ENCODE measurements at regions of chr22 and their contacts with region 1.

Region 1: DNA sequence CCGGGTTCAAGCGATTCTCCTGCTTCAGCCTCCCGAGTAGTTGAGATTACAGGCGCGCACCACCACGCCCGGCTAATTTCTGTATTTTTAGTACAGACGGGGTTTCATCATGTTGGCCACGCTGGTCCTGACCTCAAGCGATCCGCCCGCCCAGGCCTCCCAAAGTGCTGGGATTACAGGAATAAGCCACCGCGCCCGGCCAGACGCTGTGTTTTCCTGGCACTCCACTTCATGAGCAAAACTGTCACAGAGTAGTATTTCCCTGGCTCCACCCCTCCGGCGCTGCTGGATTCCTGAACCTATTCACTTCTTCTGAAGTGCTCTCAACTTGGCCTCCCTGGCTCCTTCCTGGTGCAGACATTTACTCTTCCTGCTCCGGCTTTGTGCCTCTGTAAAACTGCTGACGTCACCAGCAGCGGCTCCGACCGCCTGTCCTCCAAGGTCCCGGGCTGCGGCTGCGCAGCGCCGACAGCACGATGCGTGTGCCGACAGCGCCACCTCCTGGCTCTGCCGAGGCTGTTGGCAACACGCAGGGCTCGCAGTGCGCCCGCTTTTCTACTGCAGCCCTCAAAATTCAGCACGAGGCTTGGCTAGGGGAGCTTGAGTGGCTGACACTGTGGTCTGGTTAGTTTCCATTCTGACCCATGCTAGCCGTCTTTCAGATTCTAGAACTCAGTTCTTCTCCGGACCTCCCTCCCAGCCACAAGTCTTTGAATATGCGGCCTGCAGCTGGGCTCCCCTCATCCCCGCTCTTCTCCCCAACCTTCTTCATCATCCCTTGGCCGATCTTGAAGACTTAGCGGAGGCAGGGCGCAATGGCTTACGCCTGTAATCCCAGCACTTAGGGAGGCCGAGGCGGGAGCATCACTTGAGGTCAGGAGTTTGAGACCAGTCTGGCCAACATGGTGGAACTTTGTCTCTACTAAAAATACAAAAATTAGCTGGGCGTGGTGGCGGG is 36.6 kb downstream of the APOL3 start:
- DNase-seq: peak; percentile 90 to 99
- ATAC-seq: peak; percentile 99
- H3K4me3 ChIP-seq: peak overlapping the region; percentile 44
- H3K4me3 Mint-ChIP-seq: peak overlapping the region; percentile 95
- H3K27ac ChIP-seq: peak overlapping the region; percentile 75
- H3K27ac Mint-ChIP-seq: peak overlapping the region; percentile 88 to 93
- H3K4me1 ChIP-seq: peaks cover 12% of the 10 kb centered on the region
- H3K4me1 Mint-ChIP-seq: peaks cover 8% of the 10 kb centered on the region in 2 donors
- H3K27me3 ChIP-seq: no peaks in the 10 kb centered on the region
- H3K27me3 Mint-ChIP-seq: peaks cover 0 to 3% of the 10 kb centered on the region in 2 donors
- CTCF ChIP-seq: peak; percentile 97

Region 2: DNA sequence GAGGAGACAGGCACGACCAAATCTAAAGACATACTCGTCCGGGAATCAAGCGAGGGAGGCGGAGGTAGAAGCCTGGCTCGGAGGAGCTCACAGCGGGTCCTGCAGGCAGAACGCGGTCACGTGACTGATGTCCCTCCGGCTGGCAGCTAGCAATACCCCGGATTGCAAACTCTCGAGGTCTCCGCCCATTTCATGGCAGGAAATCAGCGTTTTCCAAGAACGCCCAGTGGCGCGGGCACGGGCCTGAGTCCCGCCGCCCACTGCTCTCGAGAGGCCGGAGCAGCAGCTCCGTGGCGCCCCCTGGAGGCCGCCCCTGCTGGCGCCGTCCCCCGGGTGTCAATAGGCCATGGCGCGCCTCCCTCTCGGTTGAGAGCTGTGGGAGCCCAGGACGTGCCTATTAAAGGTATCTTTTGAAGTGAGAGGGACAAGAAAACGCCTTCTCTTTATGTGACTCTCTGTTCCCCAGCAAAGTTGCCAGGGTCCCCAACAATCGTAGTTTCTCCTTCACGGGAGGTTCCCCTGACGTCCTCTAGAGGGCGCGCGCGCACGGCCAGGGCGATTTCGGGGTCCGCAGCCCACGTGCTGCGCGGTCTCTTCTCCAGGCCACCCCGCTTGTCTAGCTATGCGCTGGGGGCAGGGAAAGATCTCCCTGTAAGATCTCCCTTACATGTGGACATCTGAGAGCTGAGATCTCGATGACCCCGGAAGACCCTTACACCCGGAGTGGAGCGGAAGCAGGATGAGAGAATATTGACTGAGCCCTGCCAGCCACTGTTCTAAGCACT is 58.0 kb before region 1 on chr22:
- intact Hi-C with region 1: loop called (anchors 1 kb)
- DNase-seq: peak; percentile 67 to 76
- ATAC-seq: peak; percentile 83 to 86 (median 84)
- H3K4me3 ChIP-seq: peak overlapping the region; percentile 39
- H3K4me3 Mint-ChIP-seq: peak overlapping the region; percentile 89
- H3K27ac ChIP-seq: no peak overlapping the region
- H3K27ac Mint-ChIP-seq: peak overlapping the region in 1 of 2 donors; percentile 86
- H3K4me1 ChIP-seq: peaks cover 14% of the 10 kb centered on the region
- H3K4me1 Mint-ChIP-seq: peaks cover 5 to 12% of the 10 kb centered on the region in 2 donors
- H3K27me3 ChIP-seq: no peaks in the 10 kb centered on the region
- H3K27me3 Mint-ChIP-seq: no peaks in the 10 kb centered on the region
- CTCF ChIP-seq: peak; percentile 100

Region 3: GRCh38 chr22:36086170-36086490 is 37.8 kb before region 1 on chr22:
- intact Hi-C with region 1: no loop called
- DNase-seq: no peak
- ATAC-seq: no peak
- H3K4me3 ChIP-seq: no peak overlapping the region
- H3K4me3 Mint-ChIP-seq: no peak overlapping the region
- H3K27ac ChIP-seq: no peak overlapping the region
- H3K27ac Mint-ChIP-seq: no peak overlapping the region
- H3K4me1 ChIP-seq: peaks cover 4% of the 10 kb centered on the region
- H3K4me1 Mint-ChIP-seq: no peaks in the 10 kb centered on the region
- H3K27me3 ChIP-seq: no peaks in the 10 kb centered on the region
- H3K27me3 Mint-ChIP-seq: no peaks in the 10 kb centered on the region
- CTCF ChIP-seq: no peak

Region 4: GRCh38 chr22:36110306-36110881 is 13.6 kb before region 1 on chr22:
- intact Hi-C with region 1: no loop called
- DNase-seq: no peak
- ATAC-seq: no peak
- H3K4me3 ChIP-seq: no peak overlapping the region
- H3K4me3 Mint-ChIP-seq: no peak overlapping the region
- H3K27ac ChIP-seq: no peak overlapping the region
- H3K27ac Mint-ChIP-seq: no peak overlapping the region
- H3K4me1 ChIP-seq: no peaks in the 10 kb centered on the region
- H3K4me1 Mint-ChIP-seq: no peaks in the 10 kb centered on the region
- H3K27me3 ChIP-seq: no peaks in the 10 kb centered on the region
- H3K27me3 Mint-ChIP-seq: peaks cover 7 to 11% of the 10 kb centered on the region in 2 donors
- CTCF ChIP-seq: no peak

Region 5: DNA sequence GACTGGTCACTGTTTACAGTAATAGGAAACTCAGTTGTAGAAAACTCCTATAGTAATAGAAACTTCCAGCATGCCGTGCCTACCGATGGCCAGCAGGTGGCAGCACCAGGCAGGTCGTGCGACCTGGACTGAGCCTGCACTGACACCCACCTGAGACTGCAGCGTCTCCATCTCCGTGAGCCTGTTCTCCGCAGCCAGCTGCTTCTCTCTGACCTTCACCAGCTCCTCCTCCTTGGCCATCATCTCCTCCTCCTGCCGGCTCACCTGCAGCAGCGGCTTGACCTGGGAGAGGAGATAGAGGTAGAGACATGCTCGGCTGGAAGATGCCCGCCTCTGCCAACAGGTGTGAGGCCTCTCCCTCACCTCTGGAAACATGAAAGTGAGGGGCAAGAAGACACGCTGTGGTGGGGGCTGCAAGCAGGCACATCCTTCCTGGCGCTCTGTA is 177.5 kb after region 1 on chr22:
- intact Hi-C with region 1: no loop called
- DNase-seq: peak; percentile 79 to 92
- ATAC-seq: peak; percentile 88 to 97 (median 92)
- H3K4me3 ChIP-seq: no peak overlapping the region
- H3K4me3 Mint-ChIP-seq: no peak overlapping the region
- H3K27ac ChIP-seq: no peak overlapping the region
- H3K27ac Mint-ChIP-seq: peak overlapping the region in 1 of 2 donors; percentile 64
- H3K4me1 ChIP-seq: peaks cover 7% of the 10 kb centered on the region
- H3K4me1 Mint-ChIP-seq: peaks cover 4 to 14% of the 10 kb centered on the region in 2 donors
- H3K27me3 ChIP-seq: no peaks in the 10 kb centered on the region
- H3K27me3 Mint-ChIP-seq: no peaks in the 10 kb centered on the region
- CTCF ChIP-seq: peak; percentile 95

Measured in natural killer cell (primary cell).